ENCODE measurements at regions of chr1 and their contacts with region 1.

Region 1: DNA sequence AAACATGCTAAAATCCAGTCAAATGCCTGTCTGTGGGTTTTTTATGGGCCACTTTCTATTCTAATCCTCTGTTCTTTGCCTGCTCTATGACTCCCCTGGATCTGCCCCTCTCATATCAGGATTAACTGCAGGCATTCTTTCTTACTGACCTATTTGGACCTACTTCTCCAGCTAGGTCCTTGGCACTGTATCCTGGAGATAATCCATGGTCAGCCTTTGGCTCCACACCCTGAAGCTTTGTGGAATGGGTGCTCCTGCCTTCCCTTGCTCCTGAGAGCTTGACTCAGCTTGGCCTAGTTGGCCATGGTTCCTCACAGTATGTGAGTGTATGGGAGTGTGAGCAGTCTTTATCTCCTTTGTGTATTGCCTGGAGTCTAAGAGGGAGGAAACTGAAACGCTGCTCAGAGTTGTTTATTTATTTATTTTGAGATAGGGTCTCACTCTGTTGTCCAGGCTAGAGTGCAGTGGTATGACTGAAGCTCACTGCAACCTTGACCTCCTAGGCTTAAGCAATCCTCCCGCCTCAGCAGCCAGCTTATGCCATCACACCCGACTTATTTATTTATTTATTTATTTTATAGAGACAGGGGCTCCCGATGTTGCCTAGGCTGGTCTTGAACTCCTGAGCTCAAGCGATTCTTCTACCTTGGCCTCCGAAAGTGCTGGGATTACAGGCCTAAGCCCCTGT is 28.7 kb upstream of the CDC14A start:
- DNase-seq: no peak
- H3K4me3 ChIP-seq: no peak overlapping the region
- H3K4me3 Mint-ChIP-seq: no peak overlapping the region
- H3K27ac Mint-ChIP-seq: no peak overlapping the region
- H3K4me1 ChIP-seq: peaks cover 35% of the 10 kb centered on the region
- H3K4me1 Mint-ChIP-seq: peaks cover 21% of the 10 kb centered on the region
- H3K27me3 ChIP-seq: no peaks in the 10 kb centered on the region
- H3K27me3 Mint-ChIP-seq: no peaks in the 10 kb centered on the region
- CTCF ChIP-seq: no peak

Region 2: GRCh38 chr1:100299521-100300222 is 23.9 kb before region 1 on chr1:
- CTCF ChIA-PET with region 1: no interaction called
- POLR2A ChIA-PET with region 1: no interaction called
- intact Hi-C with region 1: loop called (anchors 2 kb)
- DNase-seq: no peak
- H3K4me3 ChIP-seq: no peak overlapping the region
- H3K4me3 Mint-ChIP-seq: no peak overlapping the region
- H3K27ac Mint-ChIP-seq: no peak overlapping the region
- H3K4me1 ChIP-seq: no peaks in the 10 kb centered on the region
- H3K4me1 Mint-ChIP-seq: no peaks in the 10 kb centered on the region
- H3K27me3 ChIP-seq: no peaks in the 10 kb centered on the region
- H3K27me3 Mint-ChIP-seq: no peaks in the 10 kb centered on the region
- CTCF ChIP-seq: no peak

Region 3: GRCh38 chr1:100769906-100770646 is 446.5 kb after region 1 on chr1:
- CTCF ChIA-PET with region 1: no interaction called
- POLR2A ChIA-PET with region 1: no interaction called
- intact Hi-C with region 1: no loop called
- DNase-seq: no peak
- H3K4me3 ChIP-seq: no peak overlapping the region
- H3K4me3 Mint-ChIP-seq: no peak overlapping the region
- H3K27ac Mint-ChIP-seq: no peak overlapping the region
- H3K4me1 ChIP-seq: no peaks in the 10 kb centered on the region
- H3K4me1 Mint-ChIP-seq: no peaks in the 10 kb centered on the region
- H3K27me3 ChIP-seq: no peaks in the 10 kb centered on the region
- H3K27me3 Mint-ChIP-seq: peaks cover 7% of the 10 kb centered on the region
- CTCF ChIP-seq: no peak